Activated naive CD4-positive, alpha-beta T cell treated with anti-CD3 and anti-CD28 coated beads, Interleukin-2, amount 10 ng/mL, durations not matched to agents 7 days and 5 days (primary cell): ENCODE measurements at regions of chr1 and their contacts with region 1.

Region 1: DNA sequence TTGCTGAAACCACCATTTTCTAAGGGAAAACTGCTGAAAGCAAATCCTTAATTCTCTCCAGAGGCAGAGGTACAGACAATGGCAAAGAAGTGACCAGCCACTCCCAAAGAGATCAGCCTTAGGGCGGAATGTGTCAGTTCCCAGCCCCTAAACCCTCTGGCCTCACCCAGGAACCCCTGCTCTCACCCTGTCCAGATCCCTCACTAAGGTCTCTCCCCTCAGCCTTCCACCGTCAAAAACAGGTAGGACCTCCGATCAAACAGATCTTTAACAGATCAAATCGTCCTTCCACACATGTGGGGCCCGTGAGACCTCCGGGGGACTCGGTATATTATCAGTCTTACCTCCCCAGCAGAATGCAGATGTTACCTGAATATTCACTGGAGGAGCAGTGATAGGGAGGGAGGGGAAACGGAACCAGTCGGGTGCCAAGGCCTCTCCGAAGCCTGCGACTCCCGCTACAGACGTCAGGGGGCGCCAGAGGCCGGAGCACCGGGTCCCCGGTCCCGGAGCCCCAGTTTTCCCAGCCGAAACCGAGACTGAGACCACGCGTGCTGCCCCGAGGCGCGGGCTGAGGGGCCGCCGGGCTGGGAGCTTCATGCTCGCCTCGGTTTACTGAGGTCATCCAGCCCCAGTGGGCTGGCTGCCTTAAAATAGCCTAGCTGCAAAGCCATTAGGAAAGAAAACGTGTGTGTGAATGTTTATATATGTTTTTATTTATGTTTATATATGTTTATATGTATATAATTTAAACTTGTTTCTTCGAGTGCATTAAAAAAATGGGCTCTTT is 23.6 kb downstream of the GPA33 start:
- DNase-seq: peak; percentile 84
- H3K4me3 Mint-ChIP-seq: no peak overlapping the region
- H3K27ac Mint-ChIP-seq: no peak overlapping the region
- H3K4me1 Mint-ChIP-seq: no peaks in the 10 kb centered on the region
- H3K27me3 Mint-ChIP-seq: peaks cover 3% of the 10 kb centered on the region

Region 2: GRCh38 chr1:167121375-167122120 is 55.0 kb after region 1 on chr1:
- CTCF ChIA-PET with region 1: interaction called, 39 read pairs
- DNase-seq: peak; percentile 59
- H3K4me3 Mint-ChIP-seq: peak overlapping the region; percentile 77
- H3K27ac Mint-ChIP-seq: peak overlapping the region; percentile 53
- H3K4me1 Mint-ChIP-seq: peaks cover 12% of the 10 kb centered on the region
- H3K27me3 Mint-ChIP-seq: peaks cover 54% of the 10 kb centered on the region

Region 3: DNA sequence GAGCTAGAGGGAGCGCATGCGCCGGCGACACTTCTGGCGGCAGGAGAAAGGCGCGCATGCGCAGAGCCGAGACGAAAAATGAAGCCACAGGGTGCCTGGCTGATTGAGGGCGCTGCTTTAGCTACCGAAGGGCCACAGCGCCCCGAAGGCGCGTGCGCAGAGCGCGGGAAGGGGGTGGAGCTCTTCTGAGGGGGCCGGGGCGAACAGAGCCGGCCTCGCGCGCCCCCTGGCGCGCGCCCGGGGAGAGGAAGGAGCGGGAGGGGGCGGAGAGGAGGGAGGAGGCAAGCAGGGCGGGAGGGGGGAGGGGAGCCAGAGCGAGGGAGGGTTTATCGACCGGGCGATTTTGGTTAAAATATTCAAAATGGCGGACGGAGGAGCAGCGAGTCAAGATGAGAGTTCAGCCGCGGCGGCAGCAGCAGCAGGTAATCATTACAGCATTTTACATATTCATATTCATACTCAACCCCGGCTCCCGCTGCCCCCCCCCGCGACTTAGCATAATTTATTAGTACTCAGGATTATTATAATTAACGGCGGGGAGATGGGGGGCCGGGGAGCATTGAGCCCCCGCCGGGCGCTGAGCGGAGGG is 154.1 kb after region 1 on chr1 and contains the start of gene POU2F1:
- CTCF ChIA-PET with region 1: interaction called, 20 read pairs
- DNase-seq: peak; percentile 99
- H3K4me3 Mint-ChIP-seq: peak within 1 kb of the TSS; percentile 92
- H3K27ac Mint-ChIP-seq: peak within 1 kb of the TSS; percentile 100
- H3K4me1 Mint-ChIP-seq: peaks cover 42% of the 10 kb centered on the region
- H3K27me3 Mint-ChIP-seq: peaks cover 6% of the 10 kb centered on the region

Region 4: DNA sequence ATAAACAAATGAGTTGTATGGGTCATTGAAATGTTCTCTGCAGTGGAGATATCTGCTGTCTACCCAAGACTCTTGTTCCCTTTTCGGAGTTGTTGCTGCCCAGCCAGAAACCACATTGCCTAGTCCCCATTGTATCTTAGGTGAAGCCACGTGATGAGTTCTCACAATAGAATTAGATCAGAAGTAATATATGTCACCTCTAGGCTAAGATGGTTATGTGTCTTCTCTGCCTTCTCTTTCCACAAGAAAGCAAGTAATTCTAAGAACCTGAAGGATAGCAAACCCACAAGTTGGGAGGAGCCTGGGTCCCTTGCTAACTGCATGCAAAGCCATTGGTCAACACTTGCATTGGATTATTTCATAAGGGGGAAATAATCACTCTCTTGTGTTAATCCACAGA is 770.8 kb after region 1 on chr1:
- CTCF ChIA-PET with region 1: no interaction called
- DNase-seq: no peak
- H3K4me3 Mint-ChIP-seq: no peak overlapping the region
- H3K27ac Mint-ChIP-seq: no peak overlapping the region
- H3K4me1 Mint-ChIP-seq: peaks cover 5% of the 10 kb centered on the region
- H3K27me3 Mint-ChIP-seq: peaks cover 16% of the 10 kb centered on the region